ENCODE measurements at regions of chr3 and their contacts with region 1.

Region 1: DNA sequence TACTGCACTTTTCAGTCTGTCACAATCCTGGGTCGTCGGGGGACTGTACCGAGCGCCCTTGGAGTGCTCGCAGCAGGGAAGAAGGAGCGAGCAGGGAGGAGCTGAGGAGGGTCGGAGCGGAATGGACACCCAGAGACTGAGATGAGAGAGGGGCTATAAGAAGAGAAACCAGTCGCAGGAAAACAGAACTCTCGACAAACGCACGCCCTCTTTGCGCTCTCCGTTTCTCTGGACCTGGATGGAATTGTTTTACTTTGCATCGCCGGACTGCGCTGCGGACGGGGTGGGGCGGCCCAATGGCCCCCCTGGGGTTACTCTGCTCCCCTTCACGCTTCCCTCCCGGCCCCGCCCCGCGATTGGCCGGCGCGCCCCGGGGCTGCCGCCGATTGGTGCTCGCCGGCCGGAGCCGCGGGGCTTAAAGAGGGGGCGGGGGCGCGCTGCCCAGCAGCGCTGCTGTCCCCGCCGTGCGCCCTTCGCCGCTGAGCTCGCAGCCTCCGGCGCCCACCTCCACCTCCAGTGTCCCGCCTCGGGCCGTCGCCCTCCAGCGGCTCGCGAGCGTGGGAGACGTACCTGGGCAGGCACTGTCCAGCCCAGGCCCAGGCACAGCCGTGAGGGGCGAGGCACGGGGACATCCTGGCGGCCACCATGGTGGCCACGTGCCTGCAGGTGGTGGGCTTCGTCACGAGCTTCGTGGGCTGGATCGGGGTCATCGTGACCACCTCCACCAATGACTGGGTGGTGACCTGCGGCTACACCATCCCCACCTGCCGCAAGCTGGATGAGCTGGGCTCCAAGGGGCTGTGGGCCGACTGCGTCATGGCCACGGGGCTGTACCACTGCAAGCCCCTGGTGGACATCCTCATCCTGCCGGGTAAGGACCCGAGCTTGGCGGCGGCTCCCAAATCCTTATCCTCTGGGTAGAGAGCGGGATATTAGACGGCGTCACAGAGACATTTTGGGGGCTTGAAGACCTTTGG is at the start of gene CLDN11:
- DNase-seq: peak; percentile 79
- ATAC-seq: peak; percentile 72
- total RNA-seq, gene CLDN11: 88.2 TPM

Region 2: DNA sequence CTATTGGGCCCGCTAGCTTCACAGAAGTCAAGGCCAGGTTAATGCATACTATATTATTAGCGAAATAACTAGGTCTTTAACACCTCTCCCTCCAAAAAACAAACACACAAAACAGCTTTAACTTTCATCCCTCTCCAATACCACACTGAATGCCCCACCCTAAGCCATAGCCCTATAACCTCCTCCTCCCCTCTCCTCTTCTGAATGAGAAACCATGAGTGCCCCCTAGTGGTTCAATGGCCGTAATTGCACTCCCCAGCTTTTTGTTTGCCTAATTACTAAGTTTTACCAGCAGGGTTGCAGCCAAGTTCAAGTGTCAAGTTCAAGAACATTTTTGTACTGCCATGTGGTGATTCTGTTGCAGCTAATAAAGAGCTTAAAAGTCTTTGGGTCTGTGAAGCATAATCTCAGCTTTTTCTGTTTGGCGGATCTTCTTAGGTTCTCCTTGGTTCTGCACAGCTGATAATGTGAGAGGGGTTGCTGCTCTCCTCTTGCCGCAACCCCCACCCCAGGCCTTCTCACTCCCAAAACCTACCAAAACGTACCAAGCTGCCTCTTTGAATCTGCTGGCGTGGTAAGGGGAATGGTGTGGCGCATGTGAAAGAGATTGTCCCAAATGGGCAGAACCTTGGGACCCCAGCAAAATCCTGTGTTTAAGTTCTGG is 393.4 kb after region 1 on chr3:
- intact Hi-C with region 1: loop called (anchors 5 kb)
- DNase-seq: peak; percentile 75
- ATAC-seq: peak; percentile 90